B cell (primary cell): ENCODE measurements at regions of chr12 and their contacts with region 1.

Region 1: DNA sequence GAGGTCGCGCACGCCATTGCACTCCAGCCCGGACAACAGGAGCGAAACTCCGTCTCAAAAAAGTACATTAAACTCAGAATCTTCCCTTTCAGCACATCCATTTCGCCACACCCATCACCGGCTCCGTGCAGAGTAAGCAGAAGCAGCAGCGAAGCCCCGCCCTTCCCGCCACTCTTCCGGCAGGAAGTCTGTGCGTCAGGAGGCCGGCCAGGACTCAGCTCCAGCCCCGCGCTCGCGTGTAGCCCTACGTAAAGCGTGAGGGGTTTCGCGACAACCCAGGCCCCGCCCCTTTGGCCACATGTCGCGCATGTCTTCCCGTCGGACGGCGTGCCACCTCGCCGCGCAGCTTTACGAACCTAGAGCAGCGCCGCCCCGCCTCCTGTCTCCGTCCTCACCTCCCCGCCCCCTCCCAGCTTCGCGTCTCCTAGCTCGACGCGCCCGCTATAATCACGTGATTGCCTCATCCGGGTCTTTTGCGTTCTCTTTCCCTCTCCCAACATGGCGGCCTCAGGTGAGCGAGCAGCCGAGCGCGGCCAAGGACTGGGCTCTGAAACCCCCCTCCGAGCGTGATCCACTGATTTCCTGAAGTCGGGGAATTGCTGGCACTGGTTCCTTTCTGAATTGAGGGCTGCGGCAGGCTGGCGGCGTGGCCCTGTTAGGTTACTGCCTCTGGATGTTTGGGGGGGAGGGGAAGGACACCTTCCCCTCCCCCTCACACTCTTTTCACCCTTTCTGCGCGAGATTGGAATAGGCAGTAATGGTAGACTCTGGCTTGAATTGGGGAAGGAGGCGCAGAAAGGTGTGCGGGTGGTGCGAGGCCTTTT is at the start of gene EIF4B:
- DNase-seq: peak; percentile 100
- ATAC-seq: peak; percentile 91
- H3K4me3 ChIP-seq: peak within 1 kb of the TSS; percentile 72 to 100 (median 82)
- H3K4me3 Mint-ChIP-seq: peak within 1 kb of the TSS; percentile 98
- H3K27ac ChIP-seq: peak within 1 kb of the TSS; percentile 79 to 92
- H3K27ac Mint-ChIP-seq: peak within 1 kb of the TSS; percentile 98
- H3K4me1 ChIP-seq: peaks cover 38 to 46% of the 10 kb centered on the region in 2 donors
- H3K4me1 Mint-ChIP-seq: peaks cover 44% of the 10 kb centered on the region
- H3K27me3 ChIP-seq: no peaks in the 10 kb centered on the region
- H3K27me3 Mint-ChIP-seq: no peaks in the 10 kb centered on the region
- CTCF ChIP-seq: no peak
- total RNA-seq, gene EIF4B: 631 and 674 TPM in 2 replicates

Region 2: DNA sequence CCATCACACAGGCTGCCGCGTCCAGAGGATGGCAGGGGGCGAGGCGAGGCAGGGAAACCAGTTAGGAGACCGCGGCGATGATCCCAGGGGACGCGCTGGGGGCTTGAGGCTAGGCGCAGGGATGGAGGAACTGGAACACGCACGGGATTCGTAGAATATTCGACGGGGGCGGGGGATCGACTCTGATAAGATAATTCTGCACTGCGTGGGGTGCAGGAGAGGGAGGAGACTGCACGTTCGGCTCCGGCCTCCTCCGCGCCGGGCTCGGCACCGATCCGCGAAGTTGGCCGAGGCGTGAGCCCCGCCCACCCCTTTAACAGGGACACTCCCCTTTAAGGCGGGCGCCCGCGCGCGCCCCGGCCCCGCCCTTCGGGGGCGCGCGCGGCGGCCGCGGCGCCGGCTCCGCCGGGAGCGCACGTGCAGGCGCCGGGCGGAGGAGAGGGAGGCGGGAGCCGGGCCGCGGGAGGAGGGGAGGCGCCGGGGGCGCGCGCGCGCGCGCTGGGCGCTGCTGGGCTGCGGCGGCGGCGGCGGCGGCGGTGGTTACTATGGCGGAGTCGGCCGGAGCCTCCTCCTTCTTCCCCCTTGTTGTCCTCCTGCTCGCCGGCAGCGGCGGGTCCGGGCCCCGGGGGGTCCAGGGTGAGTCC is 1054.9 kb before region 1 on chr12 and contains the start of gene ACVR1B:
- CTCF ChIA-PET with region 1: no interaction called
- POLR2A ChIA-PET with region 1: no interaction called
- intact Hi-C with region 1: loop called (anchors 5 kb)
- DNase-seq: peak; percentile 90
- ATAC-seq: peak; percentile 93
- H3K4me3 ChIP-seq: peak within 1 kb of the TSS; percentile 48 to 80 (median 75)
- H3K4me3 Mint-ChIP-seq: peak within 1 kb of the TSS; percentile 97
- H3K27ac ChIP-seq: peak within 1 kb of the TSS; percentile 6 to 60
- H3K27ac Mint-ChIP-seq: peak within 1 kb of the TSS; percentile 80
- H3K4me1 ChIP-seq: peaks cover 9 to 18% of the 10 kb centered on the region in 2 donors
- H3K4me1 Mint-ChIP-seq: peaks cover 26% of the 10 kb centered on the region
- H3K27me3 ChIP-seq: peaks cover 0 to 28% (median 6%) of the 10 kb centered on the region in 4 experiments
- H3K27me3 Mint-ChIP-seq: peaks cover 27% of the 10 kb centered on the region
- CTCF ChIP-seq: no peak
- total RNA-seq, gene ACVR1B: 8.7 and 10.6 TPM in 2 replicates

Region 3: DNA sequence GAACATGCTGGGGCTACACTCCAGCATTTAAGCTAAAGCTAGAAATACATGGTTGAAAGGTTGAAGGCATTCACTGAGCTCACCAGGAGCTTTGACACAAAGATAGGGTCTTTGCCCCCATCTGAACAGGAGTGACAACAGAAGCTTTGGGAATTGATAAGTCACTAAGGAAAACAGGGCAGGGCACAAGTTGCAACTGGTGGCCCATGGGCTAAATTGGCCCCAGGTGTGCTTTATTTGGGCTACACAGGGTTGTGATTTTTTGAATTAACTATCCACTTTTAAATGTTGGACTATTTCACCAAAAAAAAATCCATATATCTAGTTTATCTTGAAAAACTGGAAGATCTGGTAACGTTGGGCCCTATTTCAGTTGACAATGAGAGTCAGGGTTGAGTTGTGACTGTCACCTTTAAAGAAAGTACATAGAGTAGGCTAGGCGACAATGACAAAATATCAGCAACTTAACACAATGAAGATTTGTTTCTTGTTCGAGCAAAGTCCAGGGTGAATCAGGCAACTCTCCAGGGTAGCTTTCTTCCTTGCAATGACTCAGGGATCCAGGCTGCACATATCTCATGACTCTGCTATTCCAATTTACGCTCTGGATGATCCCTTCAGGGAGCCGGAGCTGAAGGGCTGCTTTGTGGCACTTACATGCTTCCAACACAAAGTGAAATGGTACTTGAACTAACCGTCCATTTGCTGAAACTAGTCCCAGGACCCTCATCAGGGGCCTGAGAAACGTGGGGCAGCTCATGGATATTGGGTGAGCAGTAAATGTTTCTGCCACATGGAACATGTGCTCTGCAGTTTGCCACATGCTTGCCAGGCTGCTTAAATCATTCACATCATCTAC is 13.3 kb before region 1 on chr12:
- CTCF ChIA-PET with region 1: no interaction called
- POLR2A ChIA-PET with region 1: no interaction called
- intact Hi-C with region 1: no loop called
- DNase-seq: no peak
- ATAC-seq: no peak
- H3K4me3 ChIP-seq: no peak overlapping the region
- H3K4me3 Mint-ChIP-seq: no peak overlapping the region
- H3K27ac ChIP-seq: no peak overlapping the region
- H3K27ac Mint-ChIP-seq: no peak overlapping the region
- H3K4me1 ChIP-seq: no peaks in the 10 kb centered on the region
- H3K4me1 Mint-ChIP-seq: no peaks in the 10 kb centered on the region
- H3K27me3 ChIP-seq: no peaks in the 10 kb centered on the region
- H3K27me3 Mint-ChIP-seq: no peaks in the 10 kb centered on the region
- CTCF ChIP-seq: no peak

Region 4: GRCh38 chr12:53047221-53048042 is 41.2 kb after region 1 on chr12:
- CTCF ChIA-PET with region 1: interaction called, 4 read pairs
- POLR2A ChIA-PET with region 1: interaction called, 3 read pairs
- intact Hi-C with region 1: loop called (anchors 2 kb)
- DNase-seq: peak; percentile 86
- ATAC-seq: peak; percentile 91
- H3K4me3 ChIP-seq: peak overlapping the region in 4 of 5 experiments; percentile 73 to 92 (median 84)
- H3K4me3 Mint-ChIP-seq: peak overlapping the region; percentile 69
- H3K27ac ChIP-seq: peak overlapping the region; percentile 38 to 65
- H3K27ac Mint-ChIP-seq: peak overlapping the region; percentile 68
- H3K4me1 ChIP-seq: peaks cover 13 to 17% of the 10 kb centered on the region in 2 donors
- H3K4me1 Mint-ChIP-seq: peaks cover 9% of the 10 kb centered on the region
- H3K27me3 ChIP-seq: peaks cover 0 to 2% (median 0%) of the 10 kb centered on the region in 4 experiments
- H3K27me3 Mint-ChIP-seq: no peaks in the 10 kb centered on the region
- CTCF ChIP-seq: peak; percentile 15

Region 5: GRCh38 chr12:53054112-53054833 is 48.1 kb after region 1 on chr12:
- CTCF ChIA-PET with region 1: no interaction called
- POLR2A ChIA-PET with region 1: no interaction called
- intact Hi-C with region 1: loop called (anchors 1 kb)
- DNase-seq: peak; percentile 97
- ATAC-seq: peak; percentile 97
- H3K4me3 ChIP-seq: peak overlapping the region; percentile 36 to 87 (median 75)
- H3K4me3 Mint-ChIP-seq: peak overlapping the region; percentile 98
- H3K27ac ChIP-seq: peak overlapping the region; percentile 52 to 65
- H3K27ac Mint-ChIP-seq: peak overlapping the region; percentile 91
- H3K4me1 ChIP-seq: peaks cover 6 to 15% of the 10 kb centered on the region in 2 donors
- H3K4me1 Mint-ChIP-seq: peaks cover 14% of the 10 kb centered on the region
- H3K27me3 ChIP-seq: peaks cover 0 to 7% (median 0%) of the 10 kb centered on the region in 4 experiments
- H3K27me3 Mint-ChIP-seq: no peaks in the 10 kb centered on the region
- CTCF ChIP-seq: no peak

Region 6: DNA sequence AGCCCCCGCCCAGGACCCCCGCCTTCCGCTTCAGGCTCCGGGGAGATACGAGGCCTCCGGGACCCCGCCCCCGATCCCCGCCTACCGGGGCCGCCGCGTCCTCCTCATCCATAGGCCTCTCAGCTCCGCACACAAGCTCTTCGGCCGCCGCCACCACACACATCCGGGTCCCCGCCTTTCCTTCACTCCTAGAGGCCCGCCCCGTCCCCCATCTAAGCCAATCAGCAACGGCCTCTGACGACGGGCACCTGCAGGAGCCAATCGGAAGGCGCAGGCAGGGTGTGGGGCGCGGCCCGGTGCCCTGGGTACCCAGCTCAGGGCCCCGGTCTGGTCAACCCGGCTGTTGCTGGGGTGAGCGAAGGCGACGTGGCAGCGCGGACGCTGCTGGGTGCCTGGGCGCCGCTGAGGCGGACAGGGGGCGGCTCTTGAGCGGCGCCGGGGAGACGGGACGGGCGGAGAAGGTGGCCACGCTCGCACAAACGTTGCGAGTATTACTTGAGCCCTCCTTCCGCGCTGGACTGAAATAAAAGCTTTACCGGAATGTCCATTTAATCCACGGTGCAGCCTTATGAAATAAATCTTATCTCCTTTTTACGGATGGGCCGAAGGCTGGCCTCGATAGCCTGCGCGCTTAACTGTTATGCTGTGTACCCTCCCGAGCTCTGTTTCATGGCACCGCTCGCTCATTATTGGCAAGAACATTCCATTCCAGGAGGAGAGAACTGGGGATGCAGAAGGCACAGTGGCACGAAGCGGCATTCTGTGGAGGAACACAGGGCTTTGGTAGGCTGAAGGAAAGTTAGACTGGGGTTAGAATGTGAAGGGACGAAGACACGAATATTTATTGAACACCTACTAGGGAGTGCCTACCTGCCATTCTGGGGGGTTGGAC is 73.3 kb after region 1 on chr12 and contains the start of gene SPRYD3:
- CTCF ChIA-PET with region 1: interaction called, 3 read pairs
- POLR2A ChIA-PET with region 1: interaction called, 7 read pairs
- intact Hi-C with region 1: loop called (anchors 1 kb)
- DNase-seq: peak; percentile 97
- ATAC-seq: peak; percentile 98
- H3K4me3 ChIP-seq: peak within 1 kb of the TSS; percentile 65 to 98 (median 80)
- H3K4me3 Mint-ChIP-seq: peak within 1 kb of the TSS; percentile 95
- H3K27ac ChIP-seq: peak within 1 kb of the TSS; percentile 51 to 75
- H3K27ac Mint-ChIP-seq: peak within 1 kb of the TSS; percentile 95
- H3K4me1 ChIP-seq: peaks cover 10 to 17% of the 10 kb centered on the region in 2 donors
- H3K4me1 Mint-ChIP-seq: peaks cover 28% of the 10 kb centered on the region
- H3K27me3 ChIP-seq: peaks cover 0 to 8% (median 0%) of the 10 kb centered on the region in 4 experiments
- H3K27me3 Mint-ChIP-seq: peaks cover 4% of the 10 kb centered on the region
- CTCF ChIP-seq: no peak
- total RNA-seq, gene SPRYD3: 39.8 and 43.3 TPM in 2 replicates

Region 7: GRCh38 chr12:53675651-53676453 is 669.7 kb after region 1 on chr12 and contains the start of gene ATP5MC2:
- CTCF ChIA-PET with region 1: no interaction called
- POLR2A ChIA-PET with region 1: no interaction called
- intact Hi-C with region 1: loop called (anchors 5 kb)
- DNase-seq: peak; percentile 99
- ATAC-seq: peak; percentile 98
- H3K4me3 ChIP-seq: peak within 1 kb of the TSS; percentile 84 to 96 (median 91)
- H3K4me3 Mint-ChIP-seq: peak within 1 kb of the TSS; percentile 96
- H3K27ac ChIP-seq: peak within 1 kb of the TSS; percentile 69 to 76
- H3K27ac Mint-ChIP-seq: peak within 1 kb of the TSS; percentile 91
- H3K4me1 ChIP-seq: peaks cover 16 to 21% of the 10 kb centered on the region in 2 donors
- H3K4me1 Mint-ChIP-seq: peaks cover 29% of the 10 kb centered on the region
- H3K27me3 ChIP-seq: peaks cover 0 to 26% (median 16%) of the 10 kb centered on the region in 4 experiments
- H3K27me3 Mint-ChIP-seq: peaks cover 15% of the 10 kb centered on the region
- CTCF ChIP-seq: peak; percentile 99
- total RNA-seq, gene ATP5MC2: 205 and 212 TPM in 2 replicates

Region 8: GRCh38 chr12:53757095-53757770 is 751.0 kb after region 1 on chr12:
- CTCF ChIA-PET with region 1: no interaction called
- POLR2A ChIA-PET with region 1: interaction called, 3 read pairs
- intact Hi-C with region 1: loop called (anchors 10 kb)
- DNase-seq: peak; percentile 83
- ATAC-seq: peak; percentile 66
- H3K4me3 ChIP-seq: no peak overlapping the region
- H3K4me3 Mint-ChIP-seq: peak overlapping the region; percentile 54
- H3K27ac ChIP-seq: no peak overlapping the region
- H3K27ac Mint-ChIP-seq: no peak overlapping the region
- H3K4me1 ChIP-seq: peaks cover 53 to 61% of the 10 kb centered on the region in 2 donors
- H3K4me1 Mint-ChIP-seq: peaks cover 20% of the 10 kb centered on the region
- H3K27me3 ChIP-seq: peaks cover 0 to 34% (median 10%) of the 10 kb centered on the region in 4 experiments
- H3K27me3 Mint-ChIP-seq: peaks cover 34% of the 10 kb centered on the region
- CTCF ChIP-seq: peak; percentile 93